ENCODE measurements at regions of chr10 and their contacts with region 1.

Region 1: DNA sequence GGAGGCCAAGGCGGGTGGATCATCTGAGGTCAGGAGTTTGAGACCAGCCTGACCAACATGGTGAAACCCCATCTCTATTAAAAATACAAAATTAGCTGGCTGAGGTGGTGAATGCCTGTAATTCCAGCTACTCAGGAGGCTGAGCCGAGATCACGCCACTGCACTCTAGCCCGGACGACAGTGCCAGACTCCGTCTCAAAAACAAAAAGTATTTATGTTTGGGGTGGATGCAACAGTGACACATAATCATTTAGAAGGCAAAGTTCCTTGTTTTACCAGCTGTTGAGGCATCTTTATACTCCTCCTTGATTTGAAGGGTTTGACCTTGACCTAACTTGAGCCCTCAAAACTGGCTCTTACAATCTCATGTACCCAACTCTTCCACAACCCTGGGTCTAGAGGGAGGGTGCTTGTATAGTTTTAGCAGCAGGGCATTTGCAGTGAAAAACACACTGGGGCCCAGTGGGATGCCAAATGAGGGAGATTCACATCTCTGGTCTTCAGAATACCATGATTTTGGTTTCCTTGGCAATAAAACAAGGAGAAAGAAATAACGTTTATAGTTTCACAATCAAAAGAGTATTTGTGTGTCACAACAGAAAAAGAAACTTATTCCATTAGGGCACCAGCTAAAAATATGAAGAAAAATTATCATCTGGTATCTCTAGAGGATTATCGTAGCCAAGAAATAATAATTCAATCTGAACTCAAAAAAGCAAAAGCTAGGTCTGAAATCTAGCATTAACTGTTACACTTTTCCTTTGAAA is 14.2 kb upstream of the TMEM254 start:
- DNase-seq: no peak
- H3K27ac ChIP-seq: no peak overlapping the region
- CTCF ChIP-seq: no peak

Region 2: GRCh38 chr10:80081931-80082750 is 17.8 kb after region 1 on chr10:
- CTCF ChIA-PET with region 1: interaction called, 12 read pairs
- POLR2A ChIA-PET with region 1: no interaction called
- DNase-seq: peak; percentile 71
- H3K27ac ChIP-seq: peak overlapping the region; percentile 77
- CTCF ChIP-seq: no peak

Region 3: GRCh38 chr10:80094231-80094630 is 29.9 kb after region 1 on chr10:
- CTCF ChIA-PET with region 1: no interaction called
- POLR2A ChIA-PET with region 1: no interaction called
- DNase-seq: no peak
- H3K27ac ChIP-seq: no peak overlapping the region
- CTCF ChIP-seq: no peak

Region 4: GRCh38 chr10:80144067-80144695 is 79.9 kb after region 1 on chr10:
- CTCF ChIA-PET with region 1: interaction called, 11 read pairs
- POLR2A ChIA-PET with region 1: no interaction called
- DNase-seq: peak; percentile 42
- H3K27ac ChIP-seq: no peak overlapping the region
- CTCF ChIP-seq: 0 out of 2 replicates have a peak, but pooled peaks have one; percentile 9